ENCODE measurements at regions of chr14 and their contacts with region 1.

Region 1: DNA sequence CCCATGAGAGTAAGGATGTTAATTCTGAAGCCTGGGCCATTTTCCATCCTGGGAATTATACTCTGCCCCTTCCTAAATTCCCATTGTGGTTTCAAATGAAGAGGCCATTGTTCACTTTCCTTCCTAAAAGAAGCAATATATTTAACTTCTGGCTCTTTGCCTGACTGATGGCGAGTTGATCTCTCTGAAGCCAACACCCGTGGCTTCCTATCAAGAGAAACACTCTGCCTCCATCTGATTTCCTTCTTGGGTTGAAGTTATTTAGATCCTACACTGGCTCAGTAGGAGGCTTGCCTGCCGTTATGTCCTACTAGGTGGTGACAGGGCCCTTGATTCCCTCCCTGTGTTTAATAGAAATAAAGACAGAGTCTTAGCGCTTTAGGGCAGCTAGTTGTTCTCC is 97.4 kb downstream of the PRKCH start:
- DNase-seq: no peak

Region 2: GRCh38 chr14:61321385-61322010 is 97.2 kb before region 1 on chr14 and contains the start of gene PRKCH:
- intact Hi-C with region 1: loop called (anchors 10 kb)
- DNase-seq: peak; percentile 84
- total RNA-seq, gene PRKCH: 17.0 TPM